Posterior vena cava (tissue), 2 donors: ENCODE measurements at regions of chr1 and their contacts with region 1.

Region 1: DNA sequence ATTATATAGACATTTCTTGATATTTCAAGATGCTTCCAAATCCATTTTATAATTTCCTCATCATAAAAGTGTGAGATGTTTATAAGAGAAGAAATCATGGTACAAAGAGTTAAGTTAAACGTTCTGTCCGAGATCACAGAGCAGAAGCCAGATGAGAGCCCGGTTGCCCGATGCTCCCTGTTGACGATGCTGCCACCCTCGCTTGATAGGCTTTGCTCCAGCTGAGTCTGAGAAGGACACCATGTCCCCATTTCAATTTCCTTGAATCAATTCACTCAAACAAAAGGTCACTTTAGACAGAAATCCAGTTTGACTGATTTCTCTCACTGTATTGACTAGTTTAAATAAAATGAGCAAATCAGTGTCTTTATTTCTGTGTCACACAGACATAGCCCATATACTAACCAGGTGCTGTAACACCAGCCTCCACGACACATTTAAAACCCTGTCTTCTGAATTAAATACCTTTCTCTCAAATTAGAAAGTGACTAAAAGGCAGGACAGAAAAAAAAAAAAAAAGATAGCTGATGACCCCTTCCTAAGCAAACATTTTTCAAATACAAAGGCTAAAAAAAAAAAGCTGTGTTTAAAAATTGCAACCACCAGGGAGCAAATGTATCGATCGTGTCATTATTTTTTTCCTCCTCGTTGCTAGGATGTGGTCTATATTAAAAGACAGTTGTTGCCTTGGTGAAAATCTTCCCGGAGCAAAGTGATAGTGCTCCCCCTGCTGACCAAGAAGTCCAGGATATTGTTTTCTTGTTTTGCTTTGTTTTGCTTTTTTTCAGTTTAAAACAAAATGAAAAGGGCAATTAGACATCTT is 35.2 kb downstream of the DNASE2B start:
- DNase-seq: no peak

Region 2: GRCh38 chr1:84135341-84135740 is 298.1 kb before region 1 on chr1:
- intact Hi-C with region 1: loop called (anchors 5 to 10 kb)
- DNase-seq: no peak

Region 3: DNA sequence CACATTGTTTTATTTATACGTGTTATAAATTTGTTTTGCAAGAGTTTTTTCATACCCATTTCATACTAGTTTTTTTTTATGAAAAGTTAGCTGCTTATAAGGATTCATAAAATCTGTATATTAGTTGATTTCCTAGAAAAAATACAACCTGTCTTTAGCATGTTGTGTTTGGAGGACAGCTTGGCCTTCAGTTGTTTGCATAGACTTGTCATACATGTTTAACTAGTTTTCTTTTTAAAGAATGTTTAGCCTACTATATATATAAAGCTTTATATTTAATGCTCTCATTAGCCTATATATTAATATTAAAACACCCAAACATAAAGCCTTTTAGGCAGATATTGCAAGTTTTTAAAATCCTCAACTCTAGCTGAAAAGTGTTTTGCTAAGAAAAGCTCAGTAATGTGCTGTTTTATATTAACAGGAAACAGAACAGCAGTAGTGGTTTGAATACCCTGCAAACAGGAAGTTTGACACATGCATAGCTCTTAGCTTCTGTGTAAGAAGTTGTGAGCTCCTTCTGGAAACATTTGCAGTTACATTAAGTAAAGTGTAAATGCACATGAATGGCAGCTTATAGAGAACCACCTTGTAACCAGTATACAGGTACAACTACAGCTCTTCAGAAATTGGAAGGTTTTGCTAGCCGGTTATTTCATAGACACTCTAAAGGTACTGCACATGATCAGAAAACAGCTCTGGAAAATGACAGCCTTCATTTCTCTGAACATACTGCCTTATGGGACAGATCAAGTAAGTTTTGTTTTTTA is 289.5 kb before region 1 on chr1 and contains the start of gene PRKACB:
- intact Hi-C with region 1: loop called (anchors 5 to 10 kb)
- DNase-seq: no peak
- total RNA-seq, gene PRKACB: 69.2 to 80.2 TPM

Region 4: GRCh38 chr1:84365225-84366221 is 67.9 kb before region 1 on chr1:
- intact Hi-C with region 1: no loop called
- DNase-seq: no peak